Activated CD4-positive, alpha-beta T cell treated with anti-CD3 and anti-CD28 coated beads, Interleukin-2, amount 10 ng/mL, durations not matched to agents 24 days and 14 days (primary cell): ENCODE measurements at regions of chr3 and their contacts with region 1.

Region 1: DNA sequence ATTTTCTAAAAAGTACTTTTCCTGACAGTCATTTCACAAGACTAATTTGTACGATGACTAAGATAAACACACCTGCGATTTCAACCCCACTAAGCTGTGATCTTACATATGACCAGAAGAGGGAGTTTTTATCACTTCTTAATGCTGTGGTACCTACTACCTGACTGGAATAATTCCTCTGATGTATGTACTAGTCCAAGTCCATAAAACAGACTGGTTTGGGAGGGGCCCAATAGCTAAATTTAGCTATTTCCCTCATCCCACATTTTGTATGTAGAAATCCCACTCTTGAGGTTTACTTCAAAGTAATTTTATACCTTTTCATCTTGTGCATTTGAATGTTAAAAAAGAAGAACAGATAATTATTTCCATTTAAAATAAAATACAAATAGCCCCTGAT is 49.7 kb upstream of the SCAANT1 start:
- DNase-seq: peak; percentile 71
- H3K4me3 Mint-ChIP-seq: no peak overlapping the region
- H3K27ac Mint-ChIP-seq: no peak overlapping the region
- H3K4me1 Mint-ChIP-seq: peaks cover 46% of the 10 kb centered on the region
- H3K27me3 Mint-ChIP-seq: no peaks in the 10 kb centered on the region

Region 2: DNA sequence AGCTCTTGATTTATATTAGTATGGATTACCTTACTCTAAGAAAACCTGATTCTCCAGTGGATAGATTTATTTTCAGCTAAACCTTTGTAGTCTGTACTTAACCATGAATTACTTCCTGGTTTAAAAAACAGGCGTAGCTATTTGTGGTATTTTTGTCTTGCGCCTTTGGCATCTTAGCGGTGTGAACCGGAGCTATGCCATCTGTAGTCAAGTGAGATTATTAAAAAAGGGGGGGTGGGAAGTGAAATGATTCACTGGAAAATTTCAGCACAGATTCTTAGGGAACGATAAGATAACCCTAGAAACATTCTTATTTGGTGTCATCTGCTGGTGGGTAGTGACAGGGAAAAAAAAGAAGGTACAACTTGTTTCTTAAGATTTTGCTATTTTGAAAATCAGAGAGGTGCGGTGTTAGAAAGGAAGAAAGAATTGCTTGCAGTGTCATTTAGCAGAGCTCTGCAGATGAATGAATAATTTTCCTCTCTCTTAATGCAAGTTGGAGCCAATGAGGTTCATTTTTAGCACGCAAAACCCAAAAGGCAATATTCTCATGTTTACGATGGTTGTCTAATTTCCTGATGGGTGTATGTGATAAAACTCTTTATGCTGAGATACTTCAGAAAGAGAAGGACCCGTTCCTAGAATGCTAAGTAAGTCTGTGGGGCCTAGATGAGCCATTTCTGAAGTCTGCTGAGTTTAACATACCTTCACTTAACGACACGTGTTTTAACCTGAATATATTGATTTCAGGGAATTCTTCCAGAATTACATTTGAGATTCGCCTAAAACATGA is 17.4 kb after region 1 on chr3:
- intact Hi-C with region 1: loop called (anchors 2 kb)
- DNase-seq: peak; percentile 66
- H3K4me3 Mint-ChIP-seq: peak overlapping the region; percentile 77
- H3K27ac Mint-ChIP-seq: peak overlapping the region; percentile 87
- H3K4me1 Mint-ChIP-seq: peaks cover 61% of the 10 kb centered on the region
- H3K27me3 Mint-ChIP-seq: no peaks in the 10 kb centered on the region

Region 3: DNA sequence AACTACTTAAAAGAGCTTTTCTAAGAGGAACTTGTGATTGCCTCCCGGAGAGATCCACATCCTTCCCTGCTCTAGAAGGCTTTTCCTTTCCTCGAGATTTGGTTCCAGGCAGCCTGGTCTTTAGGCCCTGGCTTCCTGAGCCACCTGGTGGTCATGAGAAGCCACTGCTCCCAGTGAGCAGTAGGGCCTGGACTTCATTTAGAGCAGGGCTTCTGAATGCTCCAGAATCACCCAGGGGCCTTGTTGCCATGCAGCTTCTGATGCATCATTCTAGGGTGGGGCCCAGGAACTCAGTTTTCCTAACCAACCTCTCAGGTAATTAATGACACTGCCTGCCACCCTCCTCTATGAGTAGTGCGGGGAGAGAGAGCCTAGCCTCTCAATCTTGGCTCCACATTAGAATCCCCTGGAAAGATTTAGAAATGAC is 31.8 kb after region 1 on chr3:
- intact Hi-C with region 1: loop called (anchors 1 kb)
- DNase-seq: peak; percentile 87
- H3K4me3 Mint-ChIP-seq: no peak overlapping the region
- H3K27ac Mint-ChIP-seq: peak overlapping the region; percentile 15
- H3K4me1 Mint-ChIP-seq: peaks cover 17% of the 10 kb centered on the region
- H3K27me3 Mint-ChIP-seq: no peaks in the 10 kb centered on the region